Psoas muscle (tissue), 8 donors: ENCODE measurements at regions of chr15 and their contacts with region 1.

Region 1: DNA sequence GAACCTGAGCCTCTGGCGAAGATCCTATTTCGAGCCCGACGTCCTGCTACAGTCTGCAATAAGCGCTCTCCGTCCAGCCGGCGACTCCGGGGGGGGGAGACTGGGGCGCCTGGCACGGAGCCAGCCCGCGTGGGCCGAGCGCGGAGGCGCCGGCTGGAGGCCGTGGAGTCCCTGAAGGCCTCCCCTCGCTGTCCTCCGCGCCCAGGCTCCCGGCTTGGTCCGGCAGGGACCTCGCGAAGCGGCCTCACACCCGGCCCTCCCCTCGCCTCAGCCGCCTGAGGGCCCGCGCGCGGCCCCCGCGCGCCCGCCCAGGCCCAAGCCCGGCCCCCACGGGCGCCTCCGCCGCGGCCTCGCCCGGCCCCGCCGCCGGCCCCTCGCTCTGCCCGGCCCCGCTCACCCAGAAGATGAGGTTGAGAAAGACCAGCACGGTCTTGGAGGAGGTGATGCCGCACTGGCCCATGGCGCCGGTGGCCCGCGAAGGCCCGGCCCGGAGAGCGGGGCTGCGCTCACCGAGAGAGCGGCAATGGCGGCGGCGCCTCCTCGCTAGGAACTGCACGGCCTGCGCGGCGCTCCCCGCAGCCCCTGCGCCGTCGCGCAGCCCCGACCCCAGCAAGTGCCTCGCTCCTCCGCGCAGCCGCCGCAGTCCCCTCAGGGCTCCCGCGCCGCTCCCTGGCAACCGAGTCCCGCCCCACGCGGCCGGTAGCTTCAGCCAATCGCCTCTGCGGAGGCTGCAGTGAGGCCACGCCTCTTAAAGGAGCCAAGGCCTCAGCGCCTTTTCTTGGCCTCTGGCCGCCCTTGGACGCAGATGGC is at the start of gene TSPAN3:
- DNase-seq: peak; percentile 95 to 96
- ATAC-seq: peak; percentile 92 to 95 (median 95)
- H3K4me3 ChIP-seq: peak within 1 kb of the TSS; percentile 94
- H3K27ac ChIP-seq: peak within 1 kb of the TSS; percentile 96
- H3K4me1 ChIP-seq: peaks cover 32% of the 10 kb centered on the region
- H3K27me3 ChIP-seq: no peaks in the 10 kb centered on the region
- CTCF ChIP-seq: no peak
- total RNA-seq, gene TSPAN3: 179 to 215 (median 207) TPM

Region 2: GRCh38 chr15:77034695-77035489 is 35.8 kb before region 1 on chr15:
- intact Hi-C with region 1: loop called (anchors 5 kb)
- DNase-seq: peak; percentile 44 to 73
- ATAC-seq: peak in 3 of 4 donors; percentile 34 to 52 (median 51)
- H3K4me3 ChIP-seq: no peak overlapping the region
- H3K27ac ChIP-seq: no peak overlapping the region
- H3K4me1 ChIP-seq: peaks cover 5% of the 10 kb centered on the region
- H3K27me3 ChIP-seq: no peaks in the 10 kb centered on the region
- CTCF ChIP-seq: peak; percentile 49

Region 3: DNA sequence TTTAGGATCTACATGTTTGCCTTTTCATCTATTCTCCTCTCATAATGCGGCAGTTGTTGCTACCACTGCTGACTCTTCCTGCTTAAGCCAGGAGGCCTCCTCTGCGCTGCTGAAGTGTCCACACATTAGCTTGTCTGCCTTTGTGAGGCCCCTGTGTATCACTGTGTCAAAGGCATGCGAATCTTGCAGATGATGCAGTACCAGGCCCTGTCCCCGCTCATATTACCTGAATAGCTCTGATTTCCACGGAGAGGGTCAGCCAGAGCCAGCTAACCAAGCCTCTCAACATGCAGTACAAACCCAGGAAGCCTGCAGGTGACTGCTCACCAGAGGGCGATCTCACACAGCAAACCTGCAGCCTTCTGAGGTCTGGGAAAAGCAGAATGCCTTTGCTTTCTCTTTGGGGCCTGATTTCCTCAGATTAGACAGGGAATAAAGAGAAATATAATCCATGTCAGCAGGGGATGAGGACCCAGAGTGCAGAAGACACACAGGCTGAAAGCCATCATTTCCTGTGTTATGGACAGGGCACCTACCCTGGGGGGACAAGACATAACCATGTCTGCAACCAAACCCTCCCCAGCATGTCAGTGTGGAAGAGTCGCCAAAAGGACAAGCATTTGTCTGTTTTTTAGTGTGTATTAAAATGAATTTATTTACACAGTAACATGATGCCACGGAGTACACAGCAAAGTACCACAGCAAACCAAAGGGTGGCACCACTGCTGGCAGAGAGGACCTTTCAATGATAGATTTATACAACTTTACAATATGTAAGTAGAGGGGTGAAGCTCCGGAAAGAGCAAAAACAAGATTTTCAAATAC is 37.0 kb after region 1 on chr15:
- intact Hi-C with region 1: no loop called
- DNase-seq: peak; percentile 47 to 73
- ATAC-seq: peak; percentile 85 to 94 (median 92)
- H3K4me3 ChIP-seq: no peak overlapping the region
- H3K27ac ChIP-seq: peak overlapping the region; percentile 56
- H3K4me1 ChIP-seq: peaks cover 22% of the 10 kb centered on the region
- H3K27me3 ChIP-seq: no peaks in the 10 kb centered on the region
- CTCF ChIP-seq: peak; percentile 73